ENCODE measurements at regions of chr7 and their contacts with region 1.

Region 1: GRCh38 chr7:108653526-108653925 is 83.9 kb downstream of the DNAJB9 start:
- DNase-seq: no peak
- H3K4me3 ChIP-seq: no peak overlapping the region
- H3K27ac ChIP-seq: no peak overlapping the region
- H3K4me1 ChIP-seq: peaks cover 0 to 7% (median 0%) of the 10 kb centered on the region in 4 donors
- H3K27me3 ChIP-seq: no peaks in the 10 kb centered on the region
- CTCF ChIP-seq: no peak
- EP300 ChIP-seq: no peak
- POLR2A ChIP-seq: no peak

Region 2: GRCh38 chr7:108613112-108613759 is 40.3 kb before region 1 on chr7:
- in situ Hi-C with region 1: no loop called
- intact Hi-C with region 1: no loop called
- DNase-seq: no peak
- H3K4me3 ChIP-seq: no peak overlapping the region
- H3K27ac ChIP-seq: no peak overlapping the region
- H3K4me1 ChIP-seq: peaks cover 0 to 5% (median 0%) of the 10 kb centered on the region in 4 donors
- H3K27me3 ChIP-seq: no peaks in the 10 kb centered on the region
- CTCF ChIP-seq: peak; percentile 65 to 77 (median 68)
- EP300 ChIP-seq: no peak
- POLR2A ChIP-seq: no peak

Region 3: DNA sequence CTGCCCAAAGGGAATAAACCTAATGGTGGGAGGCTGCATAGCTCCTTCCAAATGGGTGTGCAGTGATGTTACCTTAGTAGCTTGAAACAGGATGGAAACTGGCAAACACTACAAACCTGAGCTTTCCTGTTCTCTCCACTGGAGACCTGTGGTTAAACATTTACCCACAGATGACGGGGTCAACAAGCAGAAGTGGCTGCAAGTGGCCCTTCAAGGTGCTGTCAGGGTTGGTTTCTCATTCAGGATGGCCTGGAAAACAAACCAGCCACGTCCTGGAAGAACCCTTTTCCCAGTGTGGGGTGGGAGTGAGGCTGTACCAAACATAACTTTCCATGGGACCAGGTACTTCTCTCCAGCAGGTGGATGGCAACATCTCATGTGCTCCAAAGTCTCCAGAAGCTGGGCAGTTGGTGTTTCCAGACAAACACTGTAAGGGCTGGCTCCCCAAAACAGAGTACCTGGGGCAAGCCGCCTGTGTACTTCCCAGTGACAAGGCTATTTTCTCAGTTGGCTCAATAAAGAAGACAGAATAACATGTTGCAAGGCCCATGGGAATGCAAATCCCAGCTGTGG is 16.4 kb before region 1 on chr7:
- in situ Hi-C with region 1: no loop called
- intact Hi-C with region 1: loop called (anchors 1 kb)
- DNase-seq: no peak
- H3K4me3 ChIP-seq: no peak overlapping the region
- H3K27ac ChIP-seq: no peak overlapping the region
- H3K4me1 ChIP-seq: no peaks in the 10 kb centered on the region
- H3K27me3 ChIP-seq: no peaks in the 10 kb centered on the region
- CTCF ChIP-seq: no peak
- EP300 ChIP-seq: no peak
- POLR2A ChIP-seq: no peak